Endothelial cell of umbilical vein (primary cell): ENCODE measurements at regions of chr15 and their contacts with region 1.

Region 1: GRCh38 chr15:40754883-40755811 is at the start of gene RMDN3:
- DNase-seq: peak; percentile 94
- H3K4me3 ChIP-seq: peak within 1 kb of the TSS; percentile 70 to 82 (median 71)
- H3K27ac ChIP-seq: peak within 1 kb of the TSS; percentile 71
- H3K4me1 ChIP-seq: peaks cover 8% of the 10 kb centered on the region
- H3K27me3 ChIP-seq: no peaks in the 10 kb centered on the region
- CTCF ChIP-seq: no peak
- POLR2A ChIP-seq: peak; percentile 81
- total RNA-seq, gene RMDN3: 35.9 and 37.2 TPM in 2 replicates

Region 2: DNA sequence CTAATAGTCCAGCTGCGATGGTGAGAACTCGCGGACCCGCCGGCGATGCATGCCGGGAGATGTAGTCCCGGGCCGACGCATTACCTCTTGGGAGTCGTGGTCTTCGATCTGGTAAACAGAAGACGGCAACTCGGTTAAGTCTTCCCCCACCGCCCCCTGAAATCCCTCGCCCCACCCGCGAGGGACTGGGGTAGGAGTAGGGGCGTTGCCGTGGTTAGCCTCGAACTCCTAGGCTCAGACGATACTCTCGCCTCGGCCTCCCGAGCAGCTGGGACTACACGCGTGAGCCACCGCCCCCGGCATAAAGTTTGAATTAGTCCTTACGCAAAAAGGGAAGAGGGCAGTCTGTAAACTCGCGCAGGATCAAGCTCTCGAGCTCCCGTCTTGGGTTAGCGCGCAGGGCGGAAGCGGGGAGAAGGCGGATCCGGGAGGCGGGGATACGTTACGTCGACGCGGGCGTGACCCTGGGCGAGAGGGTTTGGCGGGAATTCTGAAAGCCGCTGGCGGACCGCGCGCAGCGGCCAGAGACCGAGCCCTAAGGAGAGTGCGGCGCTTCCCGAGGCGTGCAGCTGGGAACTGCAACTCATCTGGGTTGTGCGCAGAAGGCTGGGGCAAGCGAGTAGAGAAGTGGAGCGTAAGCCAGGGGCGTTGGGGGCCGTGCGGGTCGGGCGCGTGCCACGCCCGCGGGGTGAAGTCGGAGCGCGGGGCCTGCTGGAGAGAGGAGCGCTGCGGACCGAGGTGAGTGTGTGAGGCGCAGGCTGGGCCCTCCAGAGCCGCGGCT is 60.3 kb before region 1 on chr15 and contains the start of gene RAD51:
- CTCF ChIA-PET with region 1: no interaction called
- POLR2A ChIA-PET with region 1: no interaction called
- dilution Hi-C with region 1: no loop called
- intact Hi-C with region 1: loop called (anchors 2 kb)
- DNase-seq: peak; percentile 95
- H3K4me3 ChIP-seq: peak within 1 kb of the TSS; percentile 69 to 96 (median 92)
- H3K27ac ChIP-seq: peak within 1 kb of the TSS; percentile 86
- H3K4me1 ChIP-seq: peaks cover 13% of the 10 kb centered on the region
- H3K27me3 ChIP-seq: no peaks in the 10 kb centered on the region
- CTCF ChIP-seq: no peak
- POLR2A ChIP-seq: peak; percentile 63
- total RNA-seq, gene RAD51: 29.7 and 30.9 TPM in 2 replicates

Region 3: GRCh38 chr15:40769274-40770146 is 14.4 kb after region 1 on chr15 and contains the start of gene C15orf62:
- CTCF ChIA-PET with region 1: interaction called, 8 read pairs
- POLR2A ChIA-PET with region 1: no interaction called
- dilution Hi-C with region 1: no loop called
- intact Hi-C with region 1: loop called (anchors 1 kb)
- DNase-seq: peak; percentile 65
- H3K4me3 ChIP-seq: no peak within 1 kb of the TSS
- H3K27ac ChIP-seq: peak within 1 kb of the TSS; percentile 46
- H3K4me1 ChIP-seq: peaks cover 29% of the 10 kb centered on the region
- H3K27me3 ChIP-seq: no peaks in the 10 kb centered on the region
- CTCF ChIP-seq: no peak
- POLR2A ChIP-seq: no peak
- total RNA-seq, gene C15orf62: 0.38 and 0.44 TPM in 2 replicates

Region 4: DNA sequence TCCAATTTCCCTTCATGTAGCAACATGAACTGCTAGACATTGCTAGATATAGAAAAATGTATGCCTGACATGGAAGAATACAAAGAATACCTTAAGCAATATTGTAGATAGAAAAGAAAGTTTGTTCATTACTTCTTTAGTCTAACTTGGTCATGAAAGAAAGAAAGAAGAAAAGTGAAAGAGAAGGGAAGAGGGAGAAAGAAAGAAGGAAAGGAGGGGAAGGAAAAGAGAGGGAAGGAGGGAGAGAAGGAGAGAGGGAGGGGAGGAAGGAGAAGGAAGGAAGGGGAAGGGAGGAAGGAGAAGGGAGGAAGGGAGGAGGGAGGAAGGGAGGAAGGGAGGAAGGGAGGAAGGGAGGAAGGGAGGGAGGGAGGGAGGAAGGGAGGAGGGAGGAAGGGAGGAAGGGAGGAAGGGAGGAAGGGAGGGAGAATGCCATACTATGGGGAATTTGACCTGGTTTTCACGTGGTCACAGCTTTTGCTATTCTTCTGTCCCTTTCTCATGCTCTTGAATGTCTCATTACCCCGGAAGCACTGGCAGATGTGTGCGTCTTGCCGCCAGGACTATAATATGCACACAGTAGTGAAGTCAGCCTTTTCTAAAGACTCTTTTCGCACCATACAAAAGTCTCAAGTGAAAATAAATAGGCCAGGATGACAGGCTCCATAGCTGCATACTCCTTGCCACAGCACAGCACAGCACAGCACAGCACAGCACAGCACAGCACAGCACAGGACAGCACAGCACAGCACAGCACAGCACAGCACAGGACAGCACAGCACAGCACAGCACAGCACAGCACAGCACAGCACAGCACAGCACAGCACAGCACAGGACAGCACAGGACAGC is 276.3 kb after region 1 on chr15:
- CTCF ChIA-PET with region 1: no interaction called
- POLR2A ChIA-PET with region 1: no interaction called
- dilution Hi-C with region 1: no loop called
- intact Hi-C with region 1: no loop called
- DNase-seq: no peak
- H3K4me3 ChIP-seq: no peak overlapping the region
- H3K27ac ChIP-seq: no peak overlapping the region
- H3K4me1 ChIP-seq: no peaks in the 10 kb centered on the region
- H3K27me3 ChIP-seq: no peaks in the 10 kb centered on the region
- CTCF ChIP-seq: no peak
- POLR2A ChIP-seq: no peak

Region 5: GRCh38 chr15:41581110-41581509 is 826.0 kb after region 1 on chr15:
- CTCF ChIA-PET with region 1: no interaction called
- POLR2A ChIA-PET with region 1: no interaction called
- dilution Hi-C with region 1: no loop called
- intact Hi-C with region 1: no loop called
- DNase-seq: no peak
- H3K4me3 ChIP-seq: no peak overlapping the region
- H3K27ac ChIP-seq: no peak overlapping the region
- H3K4me1 ChIP-seq: peaks cover 9% of the 10 kb centered on the region
- H3K27me3 ChIP-seq: no peaks in the 10 kb centered on the region
- CTCF ChIP-seq: no peak
- POLR2A ChIP-seq: no peak